Left cardiac atrium (tissue), 4 donors: ENCODE measurements at regions of chr22 and their contacts with region 1.

Region 1: DNA sequence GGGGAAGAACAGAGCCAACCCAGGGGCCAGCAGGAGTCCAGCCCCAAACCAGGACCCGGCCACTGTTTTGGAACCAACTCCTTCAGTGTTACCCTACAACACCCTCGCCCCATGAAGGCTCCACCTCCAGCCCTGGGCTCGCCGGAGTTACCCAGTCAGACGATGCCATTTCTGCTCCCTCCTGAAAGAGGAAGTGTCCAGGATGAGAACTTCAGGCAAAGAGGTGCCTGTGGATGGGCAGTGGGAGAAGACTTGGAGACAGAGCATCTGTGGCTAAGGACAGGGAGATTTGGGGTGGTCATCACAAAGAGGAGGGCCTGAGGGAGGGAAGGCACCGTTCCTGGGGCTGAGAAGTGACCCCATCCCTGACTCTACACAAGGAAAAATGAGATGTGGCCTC is 14.0 kb downstream of the APOBEC3B start:
- DNase-seq: no peak
- ATAC-seq: no peak

Region 2: GRCh38 chr22:38941488-38941987 is 54.6 kb before region 1 on chr22:
- intact Hi-C with region 1: loop called in 1 of 2 experiments (anchors 10 kb)
- DNase-seq: no peak
- ATAC-seq: peak; percentile 15 to 35

Region 3: DNA sequence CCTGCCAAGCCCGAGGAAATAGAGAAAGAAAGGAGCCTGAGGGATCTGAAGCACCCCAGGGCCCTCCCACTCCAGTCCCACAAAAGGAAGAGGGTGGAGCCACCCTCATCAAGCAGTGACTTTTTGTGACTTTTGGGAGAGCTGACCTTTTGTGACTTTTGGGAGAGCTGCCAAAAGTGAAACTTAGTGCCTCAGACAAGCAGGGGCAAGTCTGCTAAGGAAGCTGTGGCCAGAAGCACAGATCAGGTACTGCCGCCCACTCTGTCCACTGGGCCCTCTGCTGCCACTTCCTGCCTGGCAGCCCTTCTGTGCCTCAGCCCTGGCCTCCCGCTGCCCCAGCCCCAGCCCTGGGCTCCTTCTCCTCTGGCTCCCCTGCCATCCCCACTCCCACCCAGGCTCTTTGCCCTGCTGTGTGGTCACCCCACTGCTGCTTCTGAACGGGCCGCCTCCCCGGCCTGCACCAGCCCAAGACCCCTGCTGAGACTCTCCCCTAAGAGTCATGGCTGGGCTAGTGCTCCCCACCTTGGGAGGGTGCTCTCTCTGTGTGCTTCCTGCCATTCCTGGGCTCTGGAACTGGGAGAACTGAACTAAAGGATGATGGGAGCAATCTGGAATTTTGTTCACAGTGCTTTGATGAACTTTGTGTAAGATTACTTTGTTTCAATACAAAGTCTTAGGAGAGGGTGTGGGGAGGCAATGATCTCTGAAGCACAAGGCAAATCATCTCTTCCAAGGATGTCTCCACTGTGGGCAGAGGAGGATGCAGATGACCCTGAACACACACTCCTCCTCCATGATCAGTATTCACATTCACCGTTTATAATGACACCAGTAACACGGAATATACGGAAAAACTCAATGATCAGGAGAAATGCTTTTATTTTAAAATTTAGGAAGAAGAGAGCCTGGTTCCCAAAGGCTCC is 101.3 kb after region 1 on chr22 and contains the start of gene APOBEC3H:
- intact Hi-C with region 1: no loop called
- DNase-seq: no peak
- ATAC-seq: peak; percentile 28 to 58
- total RNA-seq, gene APOBEC3H: 0.35 TPM in 1 of 2 donors, not detected in the other

Region 4: DNA sequence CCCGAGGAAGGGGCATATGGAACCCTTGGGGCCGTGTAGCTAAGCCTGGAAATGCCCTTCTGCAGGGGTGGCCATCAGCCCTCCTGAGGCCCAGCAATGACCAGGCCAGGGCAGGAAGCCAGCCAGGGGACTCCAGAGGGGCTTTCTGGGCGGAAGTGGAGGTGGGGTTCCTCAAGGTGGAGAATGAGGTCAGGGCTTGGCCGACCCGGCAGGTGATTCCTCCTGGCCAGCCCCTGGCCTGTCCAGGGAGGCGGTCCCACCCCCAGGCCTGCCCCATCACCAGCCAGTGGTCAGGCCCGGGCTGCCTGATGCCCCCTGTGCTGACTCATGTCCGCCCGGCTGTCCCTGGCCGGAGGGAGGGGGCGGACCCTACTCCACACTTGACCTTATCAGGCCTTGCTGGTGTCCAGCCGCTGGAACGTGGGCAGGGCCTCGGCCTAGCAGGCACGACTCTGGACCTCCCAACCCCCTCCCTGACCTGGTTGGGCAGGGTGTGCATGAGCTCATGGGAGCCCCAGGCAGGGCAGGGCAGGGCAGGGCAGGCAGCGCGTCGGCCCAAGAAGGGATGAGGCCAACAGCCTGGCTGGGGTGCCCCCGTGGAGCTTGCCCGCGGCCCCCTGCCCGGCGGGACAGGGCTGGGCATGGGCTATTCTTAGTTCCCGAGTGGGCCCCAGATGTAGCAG is 287.4 kb after region 1 on chr22:
- intact Hi-C with region 1: no loop called
- DNase-seq: peak; percentile 85
- ATAC-seq: peak; percentile 85 to 91